ENCODE measurements at regions of chr3 and their contacts with region 1.

Region 1: GRCh38 chr3:155712008-155712407 is 32.9 kb downstream of the PLCH1 start:
- DNase-seq: no peak
- ATAC-seq: no peak
- H3K4me3 ChIP-seq: no peak overlapping the region
- H3K27ac ChIP-seq: no peak overlapping the region
- H3K4me1 ChIP-seq: no peaks in the 10 kb centered on the region
- H3K27me3 ChIP-seq: no peaks in the 10 kb centered on the region
- CTCF ChIP-seq: no peak

Region 2: DNA sequence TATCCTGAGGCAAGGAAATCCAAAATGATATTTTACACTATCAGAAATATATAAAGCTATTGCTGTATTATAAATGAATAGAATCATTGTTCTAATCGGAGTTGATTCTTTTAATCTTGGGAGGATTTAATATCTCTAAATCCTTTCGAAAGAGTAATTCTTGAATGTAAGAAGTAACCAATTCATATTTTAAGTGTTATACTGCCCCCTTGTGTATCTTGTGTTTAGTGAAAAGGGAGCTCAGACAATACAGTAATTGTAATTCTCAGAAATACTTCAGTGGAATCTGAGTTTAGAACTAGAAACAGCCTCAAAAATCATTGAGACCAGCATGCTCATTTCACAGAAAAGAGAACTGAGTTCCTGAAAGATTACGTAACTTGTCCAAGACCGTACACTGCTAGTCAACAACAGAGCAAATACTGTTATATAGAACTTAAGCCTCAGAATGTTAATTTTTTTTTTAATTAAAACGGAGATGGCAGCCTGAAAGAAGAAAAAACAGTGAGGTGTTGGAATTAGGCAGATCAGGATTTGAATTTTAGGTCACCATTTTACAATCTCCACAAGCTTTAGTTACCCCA is 10.0 kb before region 1 on chr3:
- CTCF ChIA-PET with region 1: no interaction called
- POLR2A ChIA-PET with region 1: no interaction called
- in situ Hi-C with region 1: no loop called
- intact Hi-C with region 1: no loop called
- DNase-seq: no peak
- ATAC-seq: 0 out of 2 replicates have a peak, but pooled peaks have one; percentile 71
- H3K4me3 ChIP-seq: no peak overlapping the region
- H3K27ac ChIP-seq: no peak overlapping the region
- H3K4me1 ChIP-seq: no peaks in the 10 kb centered on the region
- H3K27me3 ChIP-seq: peaks cover 9% of the 10 kb centered on the region; the same call in 1 of the 2 replicates
- CTCF ChIP-seq: peak; percentile 68; the same call in 1 of the 2 replicates

Region 3: DNA sequence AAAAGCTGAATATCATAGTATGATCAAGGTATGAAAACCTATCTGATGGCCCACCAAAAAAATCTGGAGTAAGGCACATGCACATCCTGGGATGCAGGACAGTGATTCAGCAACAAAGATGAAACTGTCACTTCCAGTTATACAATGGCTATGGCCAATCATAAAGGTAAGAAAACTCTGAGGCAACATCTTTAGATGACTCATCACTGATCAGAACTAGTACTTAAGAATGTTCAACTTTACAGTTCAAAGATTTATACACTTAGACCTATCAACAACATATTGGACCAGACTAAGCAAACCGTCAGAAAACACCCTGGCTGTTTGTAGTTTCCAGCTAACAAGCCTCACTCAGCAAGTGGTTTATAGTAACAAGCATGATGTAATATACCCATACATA is 54.2 kb after region 1 on chr3:
- CTCF ChIA-PET with region 1: no interaction called
- POLR2A ChIA-PET with region 1: no interaction called
- in situ Hi-C with region 1: no loop called
- intact Hi-C with region 1: no loop called
- DNase-seq: no peak
- ATAC-seq: no peak
- H3K4me3 ChIP-seq: no peak overlapping the region
- H3K27ac ChIP-seq: no peak overlapping the region
- H3K4me1 ChIP-seq: no peaks in the 10 kb centered on the region
- H3K27me3 ChIP-seq: no peaks in the 10 kb centered on the region
- CTCF ChIP-seq: no peak

Region 4: GRCh38 chr3:156040041-156040440 is 328.0 kb after region 1 on chr3:
- CTCF ChIA-PET with region 1: interaction called, 12 read pairs
- POLR2A ChIA-PET with region 1: no interaction called
- in situ Hi-C with region 1: no loop called
- intact Hi-C with region 1: no loop called
- DNase-seq: no peak
- ATAC-seq: no peak
- H3K4me3 ChIP-seq: no peak overlapping the region
- H3K27ac ChIP-seq: no peak overlapping the region
- H3K4me1 ChIP-seq: no peaks in the 10 kb centered on the region
- H3K27me3 ChIP-seq: peaks cover 2% of the 10 kb centered on the region; the same call in 1 of the 2 replicates
- CTCF ChIP-seq: no peak